OCI-LY7 (cell line): ENCODE measurements at regions of chr5 and their contacts with region 1.

Region 1: GRCh38 chr5:96662725-96663513 is 743 bp downstream of the CAST start:
- DNase-seq: peak; percentile 89
- H3K4me3 ChIP-seq: peak overlapping the region; percentile 80
- H3K27ac ChIP-seq: peak overlapping the region; percentile 88
- H3K4me1 ChIP-seq: peaks cover 23% of the 10 kb centered on the region
- CTCF ChIP-seq: no peak

Region 2: GRCh38 chr5:96673127-96673526 is 10.2 kb after region 1 on chr5:
- CTCF ChIA-PET with region 1: no interaction called
- POLR2A ChIA-PET with region 1: interaction called, 12 read pairs
- intact Hi-C with region 1: no loop called
- DNase-seq: no peak
- H3K4me3 ChIP-seq: no peak overlapping the region
- H3K27ac ChIP-seq: no peak overlapping the region
- H3K4me1 ChIP-seq: no peaks in the 10 kb centered on the region
- CTCF ChIP-seq: no peak